ENCODE measurements at regions of chr7 and their contacts with region 1.

Region 1: GRCh38 chr7:106659963-106660861 is 746 bp downstream of the CCDC71L start:
- DNase-seq: peak; percentile 94
- H3K4me3 ChIP-seq: peak overlapping the region; percentile 71 to 100
- H3K27ac ChIP-seq: peak overlapping the region; percentile 86 to 98
- H3K4me1 ChIP-seq: peaks cover 9 to 20% of the 10 kb centered on the region in 2 experiments; a peak in 3 of 4 replicates
- H3K27me3 ChIP-seq: no peaks in the 10 kb centered on the region
- CTCF ChIP-seq: peak; percentile 88
- EP300 ChIP-seq: peak in 1 of 2 experiments; percentile 5; a peak in 1 of 4 replicates
- RAD21 ChIP-seq: peak; percentile 63

Region 2: DNA sequence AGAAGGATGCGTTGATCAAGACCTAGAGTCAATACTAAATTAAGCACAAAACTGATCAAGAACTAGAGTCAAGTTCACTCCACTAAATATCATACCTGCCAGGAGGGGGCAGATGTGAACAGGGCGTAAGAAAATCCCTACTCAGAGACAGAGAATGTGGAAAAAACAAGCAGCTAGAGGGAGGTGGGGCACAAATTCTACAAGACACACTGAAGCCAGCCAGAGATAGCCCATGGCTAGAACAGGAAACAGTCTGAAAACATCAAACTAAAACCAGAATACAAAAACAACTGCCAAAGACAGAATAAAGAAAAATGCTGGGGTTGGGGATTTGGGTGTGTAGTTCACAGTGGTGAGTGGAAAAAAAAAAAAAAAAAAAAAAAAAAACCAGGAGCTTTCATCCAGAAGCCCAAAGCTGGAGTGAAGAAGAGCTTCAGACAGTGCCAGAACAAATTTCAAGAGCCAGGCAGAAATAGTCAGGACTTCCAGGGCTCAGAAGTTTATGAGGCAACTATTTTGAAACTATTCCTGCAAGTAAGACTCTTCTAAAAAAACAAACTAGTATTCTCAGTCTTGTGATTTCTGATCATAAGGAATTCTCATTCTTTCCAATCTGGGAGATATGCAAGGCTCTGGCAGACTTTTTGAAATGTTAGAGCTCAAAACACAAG is 117.5 kb before region 1 on chr7:
- CTCF ChIA-PET with region 1: interaction called, 49 read pairs
- POLR2A ChIA-PET with region 1: no interaction called
- DNase-seq: peak; percentile 65
- H3K4me3 ChIP-seq: no peak overlapping the region; a peak in 1 of 4 replicates
- H3K27ac ChIP-seq: peak overlapping the region; percentile 48 to 78; a peak in 3 of 4 replicates
- H3K4me1 ChIP-seq: peaks cover 21 to 26% of the 10 kb centered on the region in 2 experiments; a peak in 3 of 4 replicates
- H3K27me3 ChIP-seq: no peaks in the 10 kb centered on the region
- CTCF ChIP-seq: peak; percentile 97
- EP300 ChIP-seq: no peak
- RAD21 ChIP-seq: peak; percentile 83

Region 3: DNA sequence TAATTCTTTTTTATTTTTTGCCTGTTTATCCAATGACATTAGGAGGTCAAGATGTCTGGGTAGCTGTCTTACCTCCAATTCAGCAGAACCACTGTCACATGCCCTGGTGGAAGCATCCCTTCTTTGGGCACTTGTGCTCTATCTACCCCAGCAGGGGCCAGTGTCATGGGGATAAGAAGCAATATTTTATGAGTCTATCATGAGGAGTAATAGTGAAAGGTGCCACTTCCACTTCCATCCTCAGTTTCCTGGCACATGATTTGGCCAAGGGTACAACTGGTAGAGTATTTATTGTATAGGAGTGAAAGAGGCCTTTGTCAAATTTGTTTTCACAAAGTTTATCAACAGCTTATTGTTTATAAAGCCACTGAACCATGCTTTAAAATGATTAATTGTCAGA is 111.7 kb before region 1 on chr7:
- CTCF ChIA-PET with region 1: interaction called, 49 read pairs
- POLR2A ChIA-PET with region 1: no interaction called
- DNase-seq: no peak
- H3K4me3 ChIP-seq: no peak overlapping the region
- H3K27ac ChIP-seq: no peak overlapping the region
- H3K4me1 ChIP-seq: 0 out of 4 replicates have a peak, but pooled peaks cover 0 to under 1% of the 10 kb centered on the region in 2 experiments
- H3K27me3 ChIP-seq: no peaks in the 10 kb centered on the region
- CTCF ChIP-seq: no peak
- EP300 ChIP-seq: no peak
- RAD21 ChIP-seq: no peak

Region 4: DNA sequence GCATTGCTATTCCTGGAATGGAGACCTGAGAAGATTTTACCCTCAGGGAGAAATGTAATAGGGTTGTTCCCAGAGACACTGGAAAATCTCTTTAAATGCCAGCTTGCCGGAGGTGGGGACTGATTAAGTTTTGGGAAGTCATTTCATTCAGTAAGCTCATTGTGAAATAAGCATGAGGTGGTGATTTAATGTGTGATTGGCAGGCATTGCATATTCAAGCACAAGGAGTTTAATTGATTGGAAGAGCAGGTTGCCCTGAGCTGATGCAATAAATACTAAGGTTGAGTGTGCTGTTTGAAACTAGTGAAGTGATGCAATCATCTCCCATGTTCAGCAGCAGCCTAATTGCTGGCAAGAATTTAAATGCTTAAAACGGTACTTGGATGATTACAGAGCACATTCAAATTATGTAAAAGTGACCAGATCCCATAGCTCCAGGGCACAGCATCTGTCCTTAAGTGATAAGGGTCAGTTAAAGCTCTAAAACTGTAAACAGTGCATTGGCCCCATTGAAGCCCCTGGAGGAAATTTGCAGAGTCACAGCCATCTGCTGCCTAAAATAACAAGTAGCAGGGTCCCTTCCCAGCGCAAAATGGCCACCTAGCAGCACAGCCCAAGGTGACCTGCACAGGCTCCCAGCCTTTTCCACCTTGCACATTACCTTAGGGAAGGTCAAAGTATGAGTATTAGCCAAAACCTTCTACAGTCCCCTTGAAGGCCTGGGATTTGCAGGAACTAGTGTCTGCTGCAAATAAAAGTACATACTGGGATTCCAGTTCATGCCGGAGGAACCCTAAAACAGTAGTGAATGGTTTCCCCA is 91.3 kb before region 1 on chr7:
- CTCF ChIA-PET with region 1: interaction called, 21 read pairs
- POLR2A ChIA-PET with region 1: interaction called, 4 read pairs
- DNase-seq: peak; percentile 80
- H3K4me3 ChIP-seq: no peak overlapping the region; a peak in 1 of 4 replicates
- H3K27ac ChIP-seq: peak overlapping the region in 1 of 2 experiments; percentile 98; a peak in 2 of 4 replicates
- H3K4me1 ChIP-seq: peaks cover 10 to 37% of the 10 kb centered on the region in 2 experiments; a peak in 3 of 4 replicates
- H3K27me3 ChIP-seq: no peaks in the 10 kb centered on the region
- CTCF ChIP-seq: no peak
- EP300 ChIP-seq: peak; percentile 7 to 94; a peak in 2 of 4 replicates
- RAD21 ChIP-seq: peak; percentile 49

Region 5: GRCh38 chr7:106644999-106645398 is 15.2 kb before region 1 on chr7:
- CTCF ChIA-PET with region 1: interaction called, 54 read pairs
- POLR2A ChIA-PET with region 1: no interaction called
- DNase-seq: no peak
- H3K4me3 ChIP-seq: no peak overlapping the region
- H3K27ac ChIP-seq: no peak overlapping the region
- H3K4me1 ChIP-seq: peaks cover 0 to 3% of the 10 kb centered on the region in 2 experiments; a peak in 1 of 4 replicates
- H3K27me3 ChIP-seq: no peaks in the 10 kb centered on the region
- CTCF ChIP-seq: no peak
- EP300 ChIP-seq: no peak
- RAD21 ChIP-seq: no peak

Region 6: GRCh38 chr7:106679153-106679931 is 19.1 kb after region 1 on chr7:
- CTCF ChIA-PET with region 1: interaction called, 23 read pairs
- POLR2A ChIA-PET with region 1: no interaction called
- DNase-seq: no peak
- H3K4me3 ChIP-seq: no peak overlapping the region
- H3K27ac ChIP-seq: peak overlapping the region; percentile 30 to 43; a peak in 3 of 4 replicates
- H3K4me1 ChIP-seq: peaks cover 0 to 2% of the 10 kb centered on the region in 2 experiments; a peak in 2 of 4 replicates
- H3K27me3 ChIP-seq: no peaks in the 10 kb centered on the region
- CTCF ChIP-seq: no peak
- EP300 ChIP-seq: no peak
- RAD21 ChIP-seq: no peak

Region 7: DNA sequence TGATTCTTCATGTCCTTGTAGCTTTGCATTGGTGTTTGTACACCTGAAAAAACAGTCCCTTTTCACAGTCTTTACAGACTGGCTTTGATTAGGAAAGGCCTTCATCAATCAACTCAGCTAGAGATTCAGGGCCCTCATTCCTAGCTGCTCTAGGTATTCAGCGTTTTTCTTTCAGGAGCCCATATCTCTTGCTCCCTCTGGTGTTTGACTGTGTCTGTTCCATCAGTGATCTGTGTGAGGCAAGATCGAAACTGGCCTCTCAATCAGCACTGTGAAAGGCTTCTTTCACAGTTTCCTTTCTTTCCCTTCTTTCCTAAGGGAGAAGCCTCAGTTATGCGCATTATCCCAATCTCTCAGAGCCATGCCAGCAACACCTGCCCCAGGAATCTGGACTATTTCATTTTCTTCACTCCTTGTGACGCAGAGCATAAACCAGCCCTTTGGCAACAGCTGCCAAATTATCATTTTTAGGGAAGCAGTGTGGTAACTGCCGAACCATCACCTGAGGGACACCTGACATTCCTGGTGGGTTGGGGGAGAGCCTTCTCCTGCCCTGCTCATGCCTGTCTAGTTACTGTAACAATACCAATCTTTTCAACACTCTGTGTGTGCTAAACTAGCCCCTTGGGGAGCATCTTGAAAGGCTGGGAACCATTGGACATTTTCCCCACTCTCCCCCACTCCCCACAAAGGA is 76.4 kb after region 1 on chr7:
- CTCF ChIA-PET with region 1: interaction called, 31 read pairs
- POLR2A ChIA-PET with region 1: no interaction called
- DNase-seq: peak; percentile 30
- H3K4me3 ChIP-seq: no peak overlapping the region
- H3K27ac ChIP-seq: peak overlapping the region; percentile 38 to 56; a peak in 3 of 4 replicates
- H3K4me1 ChIP-seq: peaks cover 4 to 5% of the 10 kb centered on the region in 2 experiments; a peak in 3 of 4 replicates
- H3K27me3 ChIP-seq: no peaks in the 10 kb centered on the region
- CTCF ChIP-seq: peak; percentile 69
- EP300 ChIP-seq: no peak
- RAD21 ChIP-seq: peak; percentile 75